ENCODE measurements at regions of chr6 and their contacts with region 1.

Region 1: GRCh38 chr6:134822920-134823709 is 126.8 kb downstream of the ALDH8A1 start:
- DNase-seq: peak in 1 of 2 experiments; percentile 44
- H3K4me3 ChIP-seq: no peak overlapping the region
- H3K27ac ChIP-seq: no peak overlapping the region
- H3K4me1 ChIP-seq: no peaks in the 10 kb centered on the region
- H3K27me3 ChIP-seq: no peaks in the 10 kb centered on the region
- CTCF ChIP-seq: peak; percentile 26 to 99 (median 92)
- EP300 ChIP-seq: no peak
- POLR2A ChIP-seq: no peak
- RAD21 ChIP-seq: peak; percentile 100

Region 2: DNA sequence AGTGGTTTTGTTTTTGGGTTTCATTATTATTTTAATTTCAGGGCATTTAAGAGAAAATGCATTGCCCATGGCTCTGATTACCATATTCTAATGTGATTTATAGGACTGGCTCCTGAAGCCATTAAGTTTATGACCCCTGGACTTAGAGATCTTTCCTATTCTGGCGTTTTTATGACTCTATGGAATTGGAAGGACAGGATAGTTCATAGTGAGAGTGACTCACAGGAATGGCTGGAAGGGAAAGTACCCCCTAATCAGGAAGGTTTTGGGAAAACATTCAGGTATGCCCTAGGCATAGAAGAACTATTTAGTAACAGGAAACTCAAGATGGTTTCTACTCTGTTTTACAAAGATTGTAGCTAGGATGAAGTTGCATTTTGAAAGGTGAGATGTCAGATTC is 662.1 kb before region 1 on chr6:
- CTCF ChIA-PET with region 1: interaction called, 19 read pairs
- POLR2A ChIA-PET with region 1: no interaction called
- DNase-seq: no peak
- H3K4me3 ChIP-seq: no peak overlapping the region
- H3K27ac ChIP-seq: no peak overlapping the region; the same call in 1 of the 2 replicates
- H3K4me1 ChIP-seq: peaks cover 0 to 3% (median 3%) of the 10 kb centered on the region in 4 experiments; a peak in 4 of 7 replicates
- H3K27me3 ChIP-seq: no peaks in the 10 kb centered on the region
- CTCF ChIP-seq: no peak
- EP300 ChIP-seq: no peak
- POLR2A ChIP-seq: no peak
- RAD21 ChIP-seq: no peak

Region 3: DNA sequence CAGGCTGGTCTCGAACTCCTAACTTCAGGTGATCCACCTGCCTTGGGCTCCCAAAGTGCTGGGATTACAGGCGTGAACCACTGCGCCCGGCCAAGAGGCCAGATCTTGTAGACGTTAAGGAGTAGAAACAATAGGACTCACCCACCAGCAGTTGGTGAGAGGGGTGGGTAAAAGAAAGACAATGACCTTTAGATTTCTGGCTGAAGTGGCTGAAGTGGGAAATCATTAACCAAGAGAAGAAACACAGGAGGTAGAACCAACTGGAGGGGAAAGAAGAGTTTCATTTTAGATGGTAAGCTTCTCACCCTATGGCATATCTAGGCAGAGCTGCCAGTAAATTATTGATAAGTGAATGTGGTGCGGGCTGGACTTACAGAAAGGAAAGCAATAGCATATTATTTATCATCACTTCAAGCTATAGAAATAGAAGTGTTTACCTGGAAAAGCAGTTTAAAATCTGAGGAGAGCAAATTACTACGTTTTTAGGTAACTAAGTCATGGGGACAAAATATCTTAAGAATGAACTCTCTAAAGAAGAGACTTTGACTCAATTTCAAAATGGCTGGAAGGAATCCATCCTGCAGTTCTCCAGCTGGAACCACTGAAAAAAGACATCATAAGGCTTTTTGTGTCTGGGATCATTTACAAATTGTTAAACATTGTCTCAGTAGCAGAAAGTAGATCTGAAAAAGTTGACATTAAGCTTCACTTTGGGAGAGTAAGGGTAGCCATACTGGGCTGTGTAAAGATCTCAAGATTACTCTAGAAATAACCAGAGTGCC is 17.2 kb after region 1 on chr6:
- CTCF ChIA-PET with region 1: interaction called, 15 read pairs
- POLR2A ChIA-PET with region 1: no interaction called
- DNase-seq: no peak
- H3K4me3 ChIP-seq: no peak overlapping the region
- H3K27ac ChIP-seq: no peak overlapping the region
- H3K4me1 ChIP-seq: 0 out of 7 replicates have a peak, but pooled peaks cover 0 to 3% (median 0%) of the 10 kb centered on the region in 4 experiments
- H3K27me3 ChIP-seq: no peaks in the 10 kb centered on the region
- CTCF ChIP-seq: no peak
- EP300 ChIP-seq: no peak
- POLR2A ChIP-seq: no peak
- RAD21 ChIP-seq: no peak

Region 4: GRCh38 chr6:134882426-134883038 is 59.4 kb after region 1 on chr6:
- CTCF ChIA-PET with region 1: interaction called, 23 read pairs
- POLR2A ChIA-PET with region 1: no interaction called
- DNase-seq: peak; percentile 29 to 72
- H3K4me3 ChIP-seq: no peak overlapping the region
- H3K27ac ChIP-seq: no peak overlapping the region
- H3K4me1 ChIP-seq: no peaks in the 10 kb centered on the region
- H3K27me3 ChIP-seq: no peaks in the 10 kb centered on the region
- CTCF ChIP-seq: peak; percentile 72 to 89 (median 85)
- EP300 ChIP-seq: no peak
- POLR2A ChIP-seq: no peak
- RAD21 ChIP-seq: peak; percentile 96 to 97

Region 5: GRCh38 chr6:136486357-136486756 is 1663.2 kb after region 1 on chr6:
- CTCF ChIA-PET with region 1: no interaction called
- POLR2A ChIA-PET with region 1: no interaction called
- DNase-seq: no peak
- H3K4me3 ChIP-seq: no peak overlapping the region
- H3K27ac ChIP-seq: no peak overlapping the region
- H3K4me1 ChIP-seq: peaks cover 0 to 3% (median 0%) of the 10 kb centered on the region in 4 experiments; a peak in 2 of 7 replicates
- H3K27me3 ChIP-seq: no peaks in the 10 kb centered on the region
- CTCF ChIP-seq: no peak
- EP300 ChIP-seq: no peak
- POLR2A ChIP-seq: no peak
- RAD21 ChIP-seq: no peak

Measured in H1 (cell line).